GM12878 (cell line): ENCODE measurements at regions of chr21 and their contacts with region 1.

Region 1: DNA sequence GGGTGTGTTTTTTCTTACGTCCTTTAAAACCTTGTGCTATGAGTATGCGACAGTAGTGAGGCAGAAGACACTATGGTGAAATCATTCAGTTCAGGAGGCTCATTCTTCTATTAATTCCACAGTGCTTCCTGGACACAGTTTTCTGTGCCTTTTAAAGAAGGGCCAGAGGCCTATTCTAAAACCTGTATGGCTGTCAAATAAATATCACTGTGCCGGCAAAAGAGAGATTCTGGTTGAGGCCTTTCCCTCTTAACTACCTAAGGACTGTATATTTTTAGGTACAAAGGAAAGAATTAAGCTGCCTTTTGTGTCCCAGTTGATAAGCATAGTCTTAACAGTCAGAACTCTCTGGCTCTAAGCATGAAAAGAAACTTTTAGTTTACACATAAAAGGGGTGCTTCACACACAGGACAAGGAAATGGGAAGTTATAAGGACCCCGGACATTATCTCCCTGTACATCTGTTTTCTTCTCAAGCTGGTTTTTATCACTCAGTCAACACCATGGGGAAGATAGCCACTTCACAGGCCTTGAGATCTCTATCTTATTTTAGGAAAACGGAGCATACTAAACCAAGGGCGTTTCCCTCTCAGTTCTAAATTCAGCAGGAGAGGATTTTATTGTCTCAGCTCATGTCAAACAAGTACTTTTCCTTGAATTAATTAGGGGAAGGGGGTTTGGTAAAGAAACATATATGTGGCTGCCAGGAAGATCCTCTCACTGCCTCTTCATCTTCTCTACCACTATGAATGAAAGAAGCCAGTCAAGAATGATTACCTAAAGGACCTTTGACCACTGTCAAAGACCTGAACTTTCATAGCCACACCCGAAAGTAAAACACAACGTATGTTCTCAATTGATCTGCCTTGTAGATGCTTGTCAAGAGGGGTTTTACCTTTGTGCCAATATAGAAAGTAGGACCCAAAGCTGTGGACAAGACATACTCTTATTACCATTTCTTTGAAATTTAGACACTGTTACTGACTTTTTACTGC is 71.4 kb upstream of the HSPA13 start:
- DNase-seq: peak; percentile 69
- ATAC-seq: peak; percentile 82
- H3K4me3 ChIP-seq: 0 out of 2 replicates have a peak overlapping the region, but pooled peaks have one; percentile 13
- H3K27ac ChIP-seq: peak overlapping the region; percentile 96
- H3K4me1 ChIP-seq: peaks cover 34% of the 10 kb centered on the region
- H3K27me3 ChIP-seq: no peaks in the 10 kb centered on the region
- CTCF ChIP-seq: no peak
- EP300 ChIP-seq: peak in 1 of 2 experiments; percentile 35; a peak in 2 of 4 replicates
- POLR2A ChIP-seq: 0 out of 2 replicates have a peak, but pooled peaks have one; percentile 20
- RAD21 ChIP-seq: no peak

Region 2: DNA sequence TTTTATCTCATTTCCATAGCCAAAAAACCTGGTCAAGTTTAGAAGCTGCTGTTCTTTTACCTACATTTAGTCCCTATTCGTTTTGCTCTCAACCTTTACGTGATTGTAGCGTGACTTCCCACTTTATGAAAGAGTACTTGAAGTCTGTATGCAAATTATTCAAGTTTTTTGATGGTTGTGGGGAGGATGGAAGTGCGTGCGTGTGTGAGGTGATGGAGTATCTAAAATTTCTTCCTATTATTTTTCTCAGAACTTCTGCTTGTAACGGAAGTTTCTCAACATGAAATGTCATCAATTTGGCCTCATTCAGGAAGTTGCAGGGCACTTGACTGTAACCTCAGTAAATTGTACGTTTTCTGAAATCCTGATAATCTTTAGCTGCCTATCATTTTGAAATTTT is 27.9 kb after region 1 on chr21:
- CTCF ChIA-PET with region 1: interaction called, 4 read pairs
- POLR2A ChIA-PET with region 1: interaction called, 7 read pairs
- RAD21 ChIA-PET with region 1: interaction called, 37 read pairs
- SMC1A ChIA-PET with region 1: interaction called, 44 read pairs
- in situ Hi-C with region 1: no loop called
- intact Hi-C with region 1: loop called (anchors 2 kb)
- DNase-seq: no peak
- ATAC-seq: peak; percentile 66
- H3K4me3 ChIP-seq: no peak overlapping the region
- H3K27ac ChIP-seq: peak overlapping the region; percentile 55; the same call in 1 of the 2 replicates
- H3K4me1 ChIP-seq: peaks cover 6% of the 10 kb centered on the region
- H3K27me3 ChIP-seq: no peaks in the 10 kb centered on the region
- CTCF ChIP-seq: no peak
- EP300 ChIP-seq: peak in 1 of 2 experiments; percentile 34; a peak in 1 of 4 replicates
- POLR2A ChIP-seq: no peak
- RAD21 ChIP-seq: no peak

Region 3: GRCh38 chr21:14545906-14546480 is 91.7 kb after region 1 on chr21 and contains the start of gene SAMSN1:
- CTCF ChIA-PET with region 1: interaction called, 5 read pairs
- POLR2A ChIA-PET with region 1: interaction called, 9 read pairs
- RAD21 ChIA-PET with region 1: interaction called, 63 read pairs
- SMC1A ChIA-PET with region 1: interaction called, 23 read pairs
- in situ Hi-C with region 1: no loop called
- intact Hi-C with region 1: no loop called
- DNase-seq: peak; percentile 78
- ATAC-seq: peak; percentile 86
- H3K4me3 ChIP-seq: peak within 1 kb of the TSS; percentile 76
- H3K27ac ChIP-seq: peak within 1 kb of the TSS; percentile 87
- H3K4me1 ChIP-seq: peaks cover 12% of the 10 kb centered on the region; the same call in 1 of the 2 replicates
- H3K27me3 ChIP-seq: no peaks in the 10 kb centered on the region
- CTCF ChIP-seq: no peak
- EP300 ChIP-seq: peak in 1 of 2 experiments; percentile 66; a peak in 1 of 4 replicates
- POLR2A ChIP-seq: peak; percentile 83
- RAD21 ChIP-seq: 0 out of 2 replicates have a peak, but pooled peaks have one; percentile 22
- polyA plus RNA-seq, gene SAMSN1: 90.4 to 102 TPM

Region 4: DNA sequence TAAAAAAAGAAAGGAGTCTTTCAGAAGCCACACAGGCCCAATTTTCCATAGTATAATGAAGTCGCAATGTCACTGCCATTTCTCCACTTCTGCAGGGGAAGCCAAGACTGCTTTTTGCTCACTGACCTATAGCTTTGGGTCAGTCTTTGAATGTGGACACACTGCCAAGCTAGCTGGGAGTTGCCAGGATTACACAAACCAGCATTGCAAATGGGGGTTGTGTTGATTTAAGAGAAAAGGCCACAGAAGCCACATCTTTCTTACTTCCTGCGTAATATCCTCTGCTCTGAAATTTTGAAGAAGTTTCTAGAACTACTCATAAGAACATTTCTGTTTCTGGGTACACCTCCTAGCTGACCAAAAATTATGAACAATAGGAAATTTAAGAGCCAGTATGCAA is 137.6 kb after region 1 on chr21:
- CTCF ChIA-PET with region 1: no interaction called
- POLR2A ChIA-PET with region 1: interaction called, 3 read pairs
- RAD21 ChIA-PET with region 1: interaction called, 5 read pairs
- SMC1A ChIA-PET with region 1: interaction called, 27 read pairs
- in situ Hi-C with region 1: no loop called
- intact Hi-C with region 1: loop called (anchors 5 kb)
- DNase-seq: no peak
- ATAC-seq: peak; percentile 79
- H3K4me3 ChIP-seq: no peak overlapping the region
- H3K27ac ChIP-seq: no peak overlapping the region
- H3K4me1 ChIP-seq: peaks cover 9% of the 10 kb centered on the region; the same call in 1 of the 2 replicates
- H3K27me3 ChIP-seq: no peaks in the 10 kb centered on the region
- CTCF ChIP-seq: no peak
- EP300 ChIP-seq: peak in 1 of 2 experiments; percentile 16; a peak in 2 of 4 replicates
- POLR2A ChIP-seq: no peak
- RAD21 ChIP-seq: no peak

Region 5: GRCh38 chr21:14686466-14687267 is 232.4 kb after region 1 on chr21:
- CTCF ChIA-PET with region 1: interaction called, 26 read pairs
- POLR2A ChIA-PET with region 1: interaction called, 16 read pairs
- RAD21 ChIA-PET with region 1: interaction called, 84 read pairs
- SMC1A ChIA-PET with region 1: interaction called, 58 read pairs
- in situ Hi-C with region 1: no loop called
- intact Hi-C with region 1: loop called (anchors 2 kb)
- DNase-seq: peak; percentile 86
- ATAC-seq: peak; percentile 70
- H3K4me3 ChIP-seq: peak overlapping the region; percentile 26; the same call in 1 of the 2 replicates
- H3K27ac ChIP-seq: peak overlapping the region; percentile 88
- H3K4me1 ChIP-seq: peaks cover 57% of the 10 kb centered on the region
- H3K27me3 ChIP-seq: no peaks in the 10 kb centered on the region
- CTCF ChIP-seq: no peak
- EP300 ChIP-seq: peak; percentile 33 to 50; a peak in 2 of 4 replicates
- POLR2A ChIP-seq: no peak
- RAD21 ChIP-seq: no peak; the same call in 1 of the 2 replicates

Region 6: GRCh38 chr21:14825514-14825974 is 371.2 kb after region 1 on chr21:
- CTCF ChIA-PET with region 1: no interaction called
- POLR2A ChIA-PET with region 1: no interaction called
- RAD21 ChIA-PET with region 1: no interaction called
- SMC1A ChIA-PET with region 1: interaction called, 4 read pairs
- in situ Hi-C with region 1: no loop called
- intact Hi-C with region 1: loop called (anchors 5 kb)
- DNase-seq: peak; percentile 34
- ATAC-seq: peak; percentile 86
- H3K4me3 ChIP-seq: no peak overlapping the region
- H3K27ac ChIP-seq: peak overlapping the region; percentile 79
- H3K4me1 ChIP-seq: peaks cover 9% of the 10 kb centered on the region; the same call in 1 of the 2 replicates
- H3K27me3 ChIP-seq: no peaks in the 10 kb centered on the region
- CTCF ChIP-seq: no peak
- EP300 ChIP-seq: peak; percentile 15 to 37; a peak in 1 of 4 replicates
- POLR2A ChIP-seq: no peak
- RAD21 ChIP-seq: no peak

Region 7: GRCh38 chr21:14850394-14850793 is 396.1 kb after region 1 on chr21:
- CTCF ChIA-PET with region 1: no interaction called
- POLR2A ChIA-PET with region 1: no interaction called
- RAD21 ChIA-PET with region 1: no interaction called
- SMC1A ChIA-PET with region 1: no interaction called
- in situ Hi-C with region 1: no loop called
- intact Hi-C with region 1: no loop called
- DNase-seq: no peak
- ATAC-seq: no peak
- H3K4me3 ChIP-seq: no peak overlapping the region
- H3K27ac ChIP-seq: no peak overlapping the region
- H3K4me1 ChIP-seq: no peaks in the 10 kb centered on the region
- H3K27me3 ChIP-seq: no peaks in the 10 kb centered on the region
- CTCF ChIP-seq: no peak
- EP300 ChIP-seq: no peak
- POLR2A ChIP-seq: no peak
- RAD21 ChIP-seq: no peak